Naive thymus-derived CD4-positive, alpha-beta T cell (primary cell): ENCODE measurements at regions of chr5 and their contacts with region 1.

Region 1: DNA sequence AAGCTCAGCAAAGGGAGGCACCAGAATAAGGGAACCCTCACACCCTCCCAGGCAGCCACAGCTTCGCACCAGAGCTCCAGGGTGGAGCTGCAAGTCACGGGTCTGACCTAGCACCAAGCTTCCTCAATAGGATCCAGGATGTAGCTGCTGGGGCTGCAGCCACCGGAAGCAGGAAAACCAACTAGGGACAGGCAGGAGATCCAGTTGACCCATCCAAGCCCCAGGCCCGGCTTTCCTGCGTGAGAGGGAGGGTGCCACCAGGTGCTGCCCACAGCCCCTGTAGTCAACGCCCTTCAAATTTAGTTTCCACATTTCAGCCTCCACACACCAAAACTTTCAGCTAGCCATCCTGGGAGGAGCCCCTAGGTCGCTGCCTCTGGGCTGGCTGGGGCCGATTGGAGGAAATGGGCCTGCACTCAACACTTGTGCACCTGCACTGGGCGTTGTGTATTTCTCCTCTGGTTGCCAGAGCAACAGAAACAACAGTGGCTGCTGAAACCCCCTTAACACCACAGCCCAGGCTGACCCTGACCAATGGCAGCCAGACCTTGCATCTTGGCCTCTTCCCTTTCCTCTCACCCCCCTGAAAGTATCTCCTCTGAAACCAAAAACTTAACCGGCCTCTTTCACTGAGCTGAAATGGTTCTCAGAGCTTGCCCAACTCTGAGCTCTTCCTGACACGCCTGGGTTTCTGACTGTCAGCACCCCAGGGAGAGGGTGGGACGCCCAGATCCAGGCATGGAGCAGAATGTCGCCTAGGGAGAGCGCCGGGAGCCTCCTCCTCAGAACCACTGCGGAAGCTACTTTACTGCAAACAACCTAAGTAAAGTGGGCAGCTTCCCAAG is 226.5 kb upstream of the MAP3K1 start:
- DNase-seq: peak; percentile 30 to 75 (median 54)
- ATAC-seq: peak; percentile 90
- H3K4me3 ChIP-seq: no peak overlapping the region
- H3K4me3 Mint-ChIP-seq: peak overlapping the region; percentile 23 to 90 (median 68)
- H3K27ac ChIP-seq: peak overlapping the region; percentile 68
- H3K27ac Mint-ChIP-seq: peak overlapping the region; percentile 85 to 97 (median 93)
- H3K4me1 ChIP-seq: peaks cover 30 to 50% of the 10 kb centered on the region in 2 donors
- H3K4me1 Mint-ChIP-seq: peaks cover 36 to 66% (median 62%) of the 10 kb centered on the region in 7 donors
- H3K27me3 ChIP-seq: no peaks in the 10 kb centered on the region
- H3K27me3 Mint-ChIP-seq: peaks cover 0 to 4% (median 0%) of the 10 kb centered on the region in 5 donors

Region 2: GRCh38 chr5:55554585-55555202 is 1034.2 kb before region 1 on chr5:
- CTCF ChIA-PET with region 1: no interaction called
- POLR2A ChIA-PET with region 1: no interaction called
- intact Hi-C with region 1: no loop called
- DNase-seq: no peak
- ATAC-seq: no peak
- H3K4me3 ChIP-seq: no peak overlapping the region
- H3K4me3 Mint-ChIP-seq: no peak overlapping the region
- H3K27ac ChIP-seq: no peak overlapping the region
- H3K27ac Mint-ChIP-seq: no peak overlapping the region
- H3K4me1 ChIP-seq: no peaks in the 10 kb centered on the region
- H3K4me1 Mint-ChIP-seq: peaks cover 0 to 4% (median 0%) of the 10 kb centered on the region in 7 donors
- H3K27me3 ChIP-seq: no peaks in the 10 kb centered on the region
- H3K27me3 Mint-ChIP-seq: peaks cover 0 to 9% (median 0%) of the 10 kb centered on the region in 5 donors

Region 3: GRCh38 chr5:56211298-56211865 is 377.5 kb before region 1 on chr5:
- CTCF ChIA-PET with region 1: no interaction called
- POLR2A ChIA-PET with region 1: no interaction called
- intact Hi-C with region 1: no loop called
- DNase-seq: no peak
- ATAC-seq: no peak
- H3K4me3 ChIP-seq: no peak overlapping the region
- H3K4me3 Mint-ChIP-seq: no peak overlapping the region
- H3K27ac ChIP-seq: no peak overlapping the region
- H3K27ac Mint-ChIP-seq: peak overlapping the region in 1 of 9 donors; percentile 72
- H3K4me1 ChIP-seq: no peaks in the 10 kb centered on the region
- H3K4me1 Mint-ChIP-seq: peaks cover 0 to under 1% (median 0%) of the 10 kb centered on the region in 7 donors
- H3K27me3 ChIP-seq: no peaks in the 10 kb centered on the region
- H3K27me3 Mint-ChIP-seq: peaks cover 0 to 3% (median 0%) of the 10 kb centered on the region in 5 donors

Region 4: GRCh38 chr5:56610093-56610698 is 21.3 kb after region 1 on chr5:
- CTCF ChIA-PET with region 1: no interaction called
- POLR2A ChIA-PET with region 1: interaction called, 9 read pairs
- intact Hi-C with region 1: loop called in 1 of 2 experiments (anchors 1 kb)
- DNase-seq: peak in 1 of 9 donors; percentile 29
- ATAC-seq: peak; percentile 41
- H3K4me3 ChIP-seq: no peak overlapping the region
- H3K4me3 Mint-ChIP-seq: peak overlapping the region in 7 of 10 donors; percentile 12 to 80 (median 39)
- H3K27ac ChIP-seq: no peak overlapping the region
- H3K27ac Mint-ChIP-seq: peak overlapping the region in 8 of 9 donors; percentile 3 to 79 (median 74)
- H3K4me1 ChIP-seq: peaks cover 20 to 58% of the 10 kb centered on the region in 2 donors
- H3K4me1 Mint-ChIP-seq: peaks cover 56 to 93% (median 89%) of the 10 kb centered on the region in 7 donors
- H3K27me3 ChIP-seq: no peaks in the 10 kb centered on the region
- H3K27me3 Mint-ChIP-seq: no peaks in the 10 kb centered on the region

Region 5: GRCh38 chr5:56670118-56670483 is 81.2 kb after region 1 on chr5:
- CTCF ChIA-PET with region 1: no interaction called
- POLR2A ChIA-PET with region 1: interaction called, 3 read pairs
- intact Hi-C with region 1: loop called in 1 of 2 experiments (anchors 1 kb)
- DNase-seq: peak in 7 of 9 donors; percentile 9 to 68 (median 40)
- ATAC-seq: peak; percentile 89
- H3K4me3 ChIP-seq: peak overlapping the region; percentile 13
- H3K4me3 Mint-ChIP-seq: peak overlapping the region; percentile 55 to 83 (median 70)
- H3K27ac ChIP-seq: peak overlapping the region; percentile 65
- H3K27ac Mint-ChIP-seq: peak overlapping the region; percentile 80 to 95 (median 90)
- H3K4me1 ChIP-seq: peaks cover 0 to 40% of the 10 kb centered on the region in 2 donors
- H3K4me1 Mint-ChIP-seq: peaks cover 35 to 53% (median 45%) of the 10 kb centered on the region in 7 donors
- H3K27me3 ChIP-seq: no peaks in the 10 kb centered on the region
- H3K27me3 Mint-ChIP-seq: peaks cover 0 to 10% (median 0%) of the 10 kb centered on the region in 5 donors

Region 6: GRCh38 chr5:56692359-56693219 is 103.7 kb after region 1 on chr5:
- CTCF ChIA-PET with region 1: no interaction called
- POLR2A ChIA-PET with region 1: interaction called, 17 read pairs
- intact Hi-C with region 1: loop called in 1 of 2 experiments (anchors 5 kb)
- DNase-seq: peak in 4 of 9 donors; percentile 18 to 47 (median 35)
- ATAC-seq: peak; percentile 53
- H3K4me3 ChIP-seq: peak overlapping the region; percentile 37
- H3K4me3 Mint-ChIP-seq: peak overlapping the region; percentile 55 to 89 (median 75)
- H3K27ac ChIP-seq: peak overlapping the region; percentile 62
- H3K27ac Mint-ChIP-seq: peak overlapping the region; percentile 79 to 98 (median 89)
- H3K4me1 ChIP-seq: peaks cover 24 to 64% of the 10 kb centered on the region in 2 donors
- H3K4me1 Mint-ChIP-seq: peaks cover 61 to 99% (median 89%) of the 10 kb centered on the region in 7 donors
- H3K27me3 ChIP-seq: no peaks in the 10 kb centered on the region
- H3K27me3 Mint-ChIP-seq: peaks cover 0 to 2% (median 0%) of the 10 kb centered on the region in 5 donors

Region 7: GRCh38 chr5:56737002-56737621 is 148.3 kb after region 1 on chr5:
- CTCF ChIA-PET with region 1: no interaction called
- POLR2A ChIA-PET with region 1: interaction called, 4 read pairs
- intact Hi-C with region 1: loop called in 1 of 2 experiments (anchors 2 kb)
- DNase-seq: peak in 1 of 9 donors; percentile 6
- ATAC-seq: peak; percentile 57
- H3K4me3 ChIP-seq: peak overlapping the region; percentile 28
- H3K4me3 Mint-ChIP-seq: peak overlapping the region; percentile 50 to 88 (median 67)
- H3K27ac ChIP-seq: peak overlapping the region; percentile 68
- H3K27ac Mint-ChIP-seq: peak overlapping the region; percentile 74 to 94 (median 89)
- H3K4me1 ChIP-seq: peaks cover 14 to 29% of the 10 kb centered on the region in 2 donors
- H3K4me1 Mint-ChIP-seq: peaks cover 40 to 64% (median 51%) of the 10 kb centered on the region in 7 donors
- H3K27me3 ChIP-seq: no peaks in the 10 kb centered on the region
- H3K27me3 Mint-ChIP-seq: peaks cover 0 to 2% (median 0%) of the 10 kb centered on the region in 5 donors